HepG2 (cell line): ENCODE measurements at regions of chr7 and their contacts with region 1.

Region 1: DNA sequence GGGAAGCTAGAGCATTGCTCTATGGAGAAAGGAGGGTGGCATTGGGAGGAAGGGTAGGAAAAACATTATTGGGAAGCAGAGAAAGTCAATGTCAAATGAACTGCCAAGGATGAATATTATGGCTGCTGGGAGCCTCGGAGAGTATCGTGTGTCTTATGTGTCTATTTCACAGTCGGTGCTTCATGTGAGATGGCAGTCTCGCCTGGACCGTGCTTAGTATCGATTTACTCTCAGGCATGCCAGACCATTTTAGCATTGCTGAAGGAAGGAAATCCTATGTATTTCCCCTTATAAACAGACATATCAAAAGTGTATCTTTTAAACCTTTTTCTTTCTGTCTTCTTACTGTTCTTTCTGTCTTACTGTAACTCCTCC is 612.6 kb downstream of the AUTS2 start:
- DNase-seq: no peak
- ATAC-seq: no peak
- H3K4me3 ChIP-seq: no peak overlapping the region
- H3K27ac ChIP-seq: no peak overlapping the region
- H3K4me1 ChIP-seq: no peaks in the 10 kb centered on the region
- H3K27me3 ChIP-seq: no peaks in the 10 kb centered on the region
- CTCF ChIP-seq: no peak
- EP300 ChIP-seq: no peak
- POLR2A ChIP-seq: no peak
- RAD21 ChIP-seq: no peak

Region 2: GRCh38 chr7:69922026-69922803 is 288.7 kb before region 1 on chr7:
- CTCF ChIA-PET with region 1: no interaction called
- POLR2A ChIA-PET with region 1: no interaction called
- in situ Hi-C with region 1: loop called (anchors 5 kb)
- intact Hi-C with region 1: no loop called
- DNase-seq: no peak
- ATAC-seq: no peak
- H3K4me3 ChIP-seq: no peak overlapping the region
- H3K27ac ChIP-seq: no peak overlapping the region
- H3K4me1 ChIP-seq: no peaks in the 10 kb centered on the region
- H3K27me3 ChIP-seq: no peaks in the 10 kb centered on the region
- CTCF ChIP-seq: no peak
- EP300 ChIP-seq: no peak
- POLR2A ChIP-seq: no peak
- RAD21 ChIP-seq: no peak